ENCODE measurements at regions of chr18 and their contacts with region 1.

Region 1: DNA sequence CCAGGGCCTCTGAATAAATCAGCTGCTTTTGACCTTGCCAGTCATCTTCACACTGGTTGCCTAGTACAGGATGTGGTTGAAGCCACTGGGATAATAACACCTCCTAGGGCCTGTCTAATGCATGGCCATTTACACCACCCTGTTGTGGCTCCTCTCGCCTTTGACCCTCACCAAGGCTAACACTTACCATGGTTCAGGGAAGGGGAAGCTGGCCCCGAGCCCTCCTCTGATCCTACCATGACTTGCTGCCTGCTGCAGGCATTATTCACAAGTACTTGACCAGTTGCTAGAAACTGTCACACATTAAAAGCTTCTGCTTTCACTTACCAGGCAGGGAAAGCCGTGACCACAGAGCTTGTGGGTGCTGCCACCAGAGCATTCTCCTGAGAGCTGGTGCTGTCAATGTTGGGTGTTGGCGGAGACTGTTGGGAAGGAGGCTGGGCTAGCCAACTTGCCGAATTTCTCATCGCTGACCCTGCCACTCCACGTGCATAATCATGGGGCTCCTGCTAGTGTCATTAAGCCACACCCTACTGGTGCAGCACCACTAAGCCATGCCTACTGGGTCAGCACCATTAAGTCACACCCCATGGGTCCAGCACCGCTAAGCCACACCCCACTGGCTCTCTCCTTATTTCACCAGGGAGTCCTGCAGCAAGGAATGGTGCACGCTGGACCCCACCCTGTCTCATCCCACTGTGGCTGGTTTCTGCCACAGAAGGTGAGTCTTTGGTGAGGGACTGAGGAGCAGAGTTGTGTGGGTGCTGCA is 47.0 kb upstream of the TTC39C start:
- DNase-seq: no peak
- ATAC-seq: peak; percentile 58
- H3K4me3 ChIP-seq: no peak overlapping the region
- H3K4me3 Mint-ChIP-seq: peak overlapping the region in 5 of 10 donors; percentile 4 to 80 (median 29)
- H3K27ac ChIP-seq: no peak overlapping the region
- H3K27ac Mint-ChIP-seq: peak overlapping the region in 7 of 9 donors; percentile 30 to 91 (median 86)
- H3K4me1 ChIP-seq: peaks cover 43 to 70% of the 10 kb centered on the region in 2 donors
- H3K4me1 Mint-ChIP-seq: peaks cover 43 to 82% (median 79%) of the 10 kb centered on the region in 7 donors
- H3K27me3 ChIP-seq: no peaks in the 10 kb centered on the region
- H3K27me3 Mint-ChIP-seq: no peaks in the 10 kb centered on the region

Region 2: DNA sequence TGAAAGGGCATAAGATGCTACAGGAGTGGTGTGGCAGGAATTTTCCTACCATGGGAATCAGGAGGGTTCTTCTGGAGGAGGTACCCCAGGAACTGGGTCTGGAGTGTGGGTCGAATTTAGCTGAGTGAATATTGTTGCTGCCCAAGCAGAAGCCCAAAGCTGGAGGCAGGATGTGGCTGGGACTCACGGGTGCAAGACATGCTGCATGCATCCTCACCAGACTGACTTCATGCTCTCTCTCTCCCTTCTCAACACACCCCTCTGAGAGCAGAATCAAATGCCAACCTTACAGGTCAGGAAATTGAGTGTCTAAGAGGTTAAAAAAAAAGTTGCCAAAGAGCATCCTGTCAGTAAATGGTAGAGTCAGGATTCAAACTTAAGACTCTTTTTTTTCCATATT is 31.7 kb before region 1 on chr18:
- CTCF ChIA-PET with region 1: no interaction called
- POLR2A ChIA-PET with region 1: interaction called, 4 read pairs
- intact Hi-C with region 1: loop called (anchors 1 to 2 kb)
- DNase-seq: peak in 6 of 9 donors; percentile 5 to 44 (median 26)
- ATAC-seq: no peak
- H3K4me3 ChIP-seq: no peak overlapping the region
- H3K4me3 Mint-ChIP-seq: peak overlapping the region; percentile 22 to 68 (median 62)
- H3K27ac ChIP-seq: no peak overlapping the region
- H3K27ac Mint-ChIP-seq: peak overlapping the region in 7 of 9 donors; percentile 21 to 89 (median 54)
- H3K4me1 ChIP-seq: peaks cover 39 to 42% of the 10 kb centered on the region in 2 donors
- H3K4me1 Mint-ChIP-seq: peaks cover 27 to 71% (median 56%) of the 10 kb centered on the region in 7 donors
- H3K27me3 ChIP-seq: no peaks in the 10 kb centered on the region
- H3K27me3 Mint-ChIP-seq: peaks cover 0 to 11% (median 0%) of the 10 kb centered on the region in 5 donors

Region 3: GRCh38 chr18:23943104-23943503 is 24.4 kb before region 1 on chr18:
- CTCF ChIA-PET with region 1: no interaction called
- POLR2A ChIA-PET with region 1: interaction called, 3 read pairs
- intact Hi-C with region 1: loop called in 1 of 2 experiments (anchors 2 kb)
- DNase-seq: peak in 6 of 9 donors; percentile 13 to 51 (median 39)
- ATAC-seq: peak; percentile 65
- H3K4me3 ChIP-seq: peak overlapping the region; percentile 42
- H3K4me3 Mint-ChIP-seq: peak overlapping the region; percentile 67 to 82 (median 74)
- H3K27ac ChIP-seq: peak overlapping the region; percentile 31
- H3K27ac Mint-ChIP-seq: peak overlapping the region; percentile 61 to 92 (median 80)
- H3K4me1 ChIP-seq: peaks cover 7 to 23% of the 10 kb centered on the region in 2 donors
- H3K4me1 Mint-ChIP-seq: peaks cover 11 to 47% (median 44%) of the 10 kb centered on the region in 7 donors
- H3K27me3 ChIP-seq: no peaks in the 10 kb centered on the region
- H3K27me3 Mint-ChIP-seq: peaks cover 0 to 36% (median 0%) of the 10 kb centered on the region in 5 donors

Region 4: DNA sequence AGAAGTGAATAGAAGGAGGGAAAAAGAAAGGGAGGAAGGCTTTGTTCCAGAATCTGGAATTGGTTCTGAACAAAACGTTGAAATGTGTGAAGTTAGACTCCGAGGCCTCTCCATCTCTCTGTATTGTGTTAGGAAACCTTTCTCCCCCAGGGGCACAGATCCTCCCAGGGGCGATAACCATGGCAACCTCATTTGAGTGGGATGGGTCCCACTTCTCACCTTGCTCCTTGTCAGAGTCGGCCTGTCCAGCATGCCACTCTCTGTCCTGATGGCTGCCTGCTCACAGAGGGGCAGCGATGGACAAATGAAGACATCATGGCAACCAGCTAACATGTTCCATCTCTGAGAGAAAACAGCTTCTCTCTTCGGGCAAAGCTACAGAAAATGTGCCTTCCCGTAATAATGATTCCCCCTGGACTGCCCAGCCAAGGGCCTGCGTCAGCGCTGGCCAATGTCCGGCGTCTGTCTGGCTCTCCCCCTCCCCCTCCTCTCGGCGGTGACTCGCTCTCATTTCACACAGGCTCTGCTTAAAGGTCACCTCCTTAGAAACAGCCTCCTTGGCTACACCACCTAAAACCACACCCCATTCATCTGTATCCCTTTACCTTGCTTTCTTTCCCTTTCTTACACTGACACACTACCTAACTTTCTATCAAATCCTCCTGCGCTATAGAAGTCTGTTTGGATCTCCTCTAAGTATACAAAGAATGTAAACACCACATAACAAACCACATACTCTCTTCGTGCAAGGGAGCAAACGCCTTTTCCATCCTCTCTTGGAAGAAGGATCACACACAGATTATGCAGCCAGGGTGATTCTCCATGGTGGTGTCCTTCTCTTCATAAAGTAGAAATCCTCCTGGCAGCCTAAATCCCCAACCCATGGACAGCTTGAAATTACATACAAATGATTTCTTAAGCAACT is 14.9 kb after region 1 on chr18:
- CTCF ChIA-PET with region 1: no interaction called
- POLR2A ChIA-PET with region 1: interaction called, 5 read pairs
- intact Hi-C with region 1: loop called in 1 of 2 experiments (anchors 1 kb)
- DNase-seq: no peak
- ATAC-seq: no peak
- H3K4me3 ChIP-seq: no peak overlapping the region
- H3K4me3 Mint-ChIP-seq: no peak overlapping the region
- H3K27ac ChIP-seq: no peak overlapping the region
- H3K27ac Mint-ChIP-seq: peak overlapping the region in 5 of 9 donors; percentile 17 to 85 (median 23)
- H3K4me1 ChIP-seq: peaks cover 10 to 18% of the 10 kb centered on the region in 2 donors
- H3K4me1 Mint-ChIP-seq: peaks cover 14 to 40% (median 32%) of the 10 kb centered on the region in 7 donors
- H3K27me3 ChIP-seq: no peaks in the 10 kb centered on the region
- H3K27me3 Mint-ChIP-seq: peaks cover 0 to 4% (median 0%) of the 10 kb centered on the region in 5 donors

Region 5: DNA sequence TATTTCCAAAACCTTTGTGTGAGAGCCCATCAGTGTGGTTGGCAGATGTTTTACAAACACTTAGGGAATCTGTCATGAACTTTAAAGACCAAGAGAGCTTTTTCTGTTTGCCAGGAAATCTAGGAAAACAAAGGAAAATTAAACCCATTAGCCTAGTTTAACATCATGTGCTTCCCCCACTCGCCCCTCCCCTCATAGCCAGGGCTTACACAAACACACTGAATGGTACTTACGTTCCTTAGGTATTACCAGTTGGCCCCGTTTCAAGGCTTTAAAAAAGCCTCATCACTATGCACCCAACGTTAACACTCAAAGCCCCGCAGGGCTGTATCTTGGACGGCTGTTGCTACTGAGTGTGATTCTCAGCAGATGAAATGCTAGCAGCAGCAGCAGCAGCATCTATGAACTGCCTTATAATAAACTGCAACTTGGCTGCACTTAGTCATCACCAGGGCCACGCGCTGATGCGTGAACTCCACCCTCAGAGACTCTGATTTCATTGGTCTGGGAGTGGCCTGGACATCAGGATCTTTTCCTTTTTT is 26.9 kb after region 1 on chr18:
- CTCF ChIA-PET with region 1: interaction called, 4 read pairs
- POLR2A ChIA-PET with region 1: interaction called, 5 read pairs
- intact Hi-C with region 1: loop called (anchors 1 to 2 kb)
- DNase-seq: peak in 1 of 9 donors; percentile 11
- ATAC-seq: no peak
- H3K4me3 ChIP-seq: no peak overlapping the region
- H3K4me3 Mint-ChIP-seq: peak overlapping the region in 6 of 10 donors; percentile 16 to 63 (median 43)
- H3K27ac ChIP-seq: no peak overlapping the region
- H3K27ac Mint-ChIP-seq: peak overlapping the region in 8 of 9 donors; percentile 59 to 96 (median 70)
- H3K4me1 ChIP-seq: peaks cover 31 to 60% of the 10 kb centered on the region in 2 donors
- H3K4me1 Mint-ChIP-seq: peaks cover 15 to 60% (median 54%) of the 10 kb centered on the region in 7 donors
- H3K27me3 ChIP-seq: no peaks in the 10 kb centered on the region
- H3K27me3 Mint-ChIP-seq: peaks cover 0 to 6% (median 0%) of the 10 kb centered on the region in 5 donors

Region 6: DNA sequence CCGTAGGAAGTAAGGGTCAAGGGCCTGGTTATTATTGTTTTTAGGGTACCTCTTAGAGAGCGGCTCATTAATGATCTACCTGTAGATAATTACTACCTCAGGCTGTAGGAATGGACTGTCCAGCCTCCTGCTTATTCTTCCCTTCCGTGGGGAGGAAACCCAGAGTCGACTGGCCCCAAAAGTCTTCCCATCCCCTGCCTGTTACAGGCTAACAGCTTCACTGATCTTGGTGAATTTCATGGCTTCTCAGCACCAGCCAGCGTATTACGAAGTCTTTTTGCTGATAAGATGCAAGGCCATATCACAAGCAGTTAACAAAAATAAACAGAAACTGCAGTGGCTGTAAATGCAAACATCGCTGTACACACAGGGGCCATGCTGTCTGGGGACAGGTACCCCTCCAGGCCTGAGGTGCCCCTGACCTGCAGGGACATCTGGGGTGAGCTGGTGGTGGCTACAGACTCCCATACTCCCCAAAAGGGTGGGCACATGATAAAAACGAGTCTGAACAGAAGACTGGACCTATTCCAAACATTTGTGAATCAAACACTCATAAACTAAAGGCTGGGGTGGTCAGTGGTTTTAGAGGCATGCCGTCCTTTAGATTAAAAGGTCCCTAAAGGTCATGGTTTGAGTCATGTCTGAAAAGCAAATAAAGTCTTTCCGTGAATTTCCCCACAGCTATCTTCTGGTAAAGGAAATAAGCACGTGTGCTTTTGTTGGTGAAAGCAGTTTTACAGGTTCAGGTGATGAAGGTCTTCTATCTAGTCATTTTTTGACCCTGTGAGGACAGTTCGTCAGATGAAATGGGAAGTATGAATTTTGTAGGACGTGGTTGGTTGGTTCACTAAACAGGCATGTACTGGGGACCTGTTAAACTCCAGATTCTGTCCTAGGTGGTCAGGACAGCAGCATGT is 83.8 kb after region 1 on chr18:
- CTCF ChIA-PET with region 1: no interaction called
- POLR2A ChIA-PET with region 1: no interaction called
- intact Hi-C with region 1: loop called in 1 of 2 experiments (anchors 5 kb)
- DNase-seq: no peak
- ATAC-seq: no peak
- H3K4me3 ChIP-seq: no peak overlapping the region
- H3K4me3 Mint-ChIP-seq: peak overlapping the region in 7 of 10 donors; percentile 16 to 50 (median 34)
- H3K27ac ChIP-seq: no peak overlapping the region
- H3K27ac Mint-ChIP-seq: peak overlapping the region in 8 of 9 donors; percentile 2 to 83 (median 51)
- H3K4me1 ChIP-seq: peaks cover 53 to 60% of the 10 kb centered on the region in 2 donors
- H3K4me1 Mint-ChIP-seq: peaks cover 49 to 96% (median 85%) of the 10 kb centered on the region in 7 donors
- H3K27me3 ChIP-seq: no peaks in the 10 kb centered on the region
- H3K27me3 Mint-ChIP-seq: no peaks in the 10 kb centered on the region

Region 7: DNA sequence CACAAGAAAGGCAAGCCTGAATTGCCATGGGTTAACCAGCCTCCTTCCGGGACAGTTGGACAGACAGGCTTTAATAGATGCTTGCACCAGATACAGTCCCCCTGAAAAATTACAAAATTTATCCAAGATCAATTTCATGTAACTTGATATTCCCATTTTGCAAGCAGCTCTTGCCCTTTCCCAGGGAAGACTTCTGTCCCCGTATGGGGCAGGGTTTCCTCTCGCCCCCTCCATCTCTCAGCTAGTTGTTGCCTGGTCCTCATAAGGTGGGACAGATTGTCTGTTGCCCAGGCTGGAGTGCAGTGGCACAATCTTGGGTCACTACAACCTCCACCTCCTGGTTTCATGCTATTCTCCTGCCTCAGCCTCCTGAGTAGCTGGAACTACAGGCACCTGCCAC is 108.2 kb after region 1 on chr18:
- CTCF ChIA-PET with region 1: no interaction called
- POLR2A ChIA-PET with region 1: no interaction called
- intact Hi-C with region 1: loop called in 1 of 2 experiments (anchors 1 kb)
- DNase-seq: no peak
- ATAC-seq: no peak
- H3K4me3 ChIP-seq: no peak overlapping the region
- H3K4me3 Mint-ChIP-seq: peak overlapping the region in 3 of 10 donors; percentile 20 to 38 (median 29)
- H3K27ac ChIP-seq: no peak overlapping the region
- H3K27ac Mint-ChIP-seq: peak overlapping the region in 8 of 9 donors; percentile 52 to 86 (median 67)
- H3K4me1 ChIP-seq: peaks cover 7 to 16% of the 10 kb centered on the region in 2 donors
- H3K4me1 Mint-ChIP-seq: peaks cover 24 to 63% (median 51%) of the 10 kb centered on the region in 7 donors
- H3K27me3 ChIP-seq: no peaks in the 10 kb centered on the region
- H3K27me3 Mint-ChIP-seq: no peaks in the 10 kb centered on the region

Measured in naive thymus-derived CD4-positive, alpha-beta T cell (primary cell).